Posterior vena cava (tissue), 2 donors: ENCODE measurements at regions of chr9 and their contacts with region 1.

Region 1: GRCh38 chr9:88635151-88635550 is 100.2 kb downstream of the NXNL2 start:
- DNase-seq: no peak

Region 2: DNA sequence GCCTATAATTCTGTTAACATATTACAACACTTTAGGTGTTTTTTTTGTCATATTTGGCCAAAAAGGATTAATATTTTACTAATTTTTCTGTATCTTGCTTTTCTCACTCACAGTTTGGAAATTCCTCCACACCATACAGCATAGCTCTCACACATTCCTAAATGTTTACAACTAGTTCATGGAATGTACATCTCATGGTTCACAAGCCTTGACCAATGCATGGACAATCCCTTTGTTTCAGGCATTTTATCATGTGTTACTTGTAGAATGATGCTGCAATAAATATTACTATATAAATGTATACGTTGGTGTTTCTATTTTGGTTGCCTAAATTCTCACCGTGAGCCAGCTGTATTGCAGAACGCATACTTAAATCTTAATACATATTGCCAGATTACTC is 416.4 kb before region 1 on chr9:
- intact Hi-C with region 1: no loop called
- DNase-seq: no peak

Region 3: DNA sequence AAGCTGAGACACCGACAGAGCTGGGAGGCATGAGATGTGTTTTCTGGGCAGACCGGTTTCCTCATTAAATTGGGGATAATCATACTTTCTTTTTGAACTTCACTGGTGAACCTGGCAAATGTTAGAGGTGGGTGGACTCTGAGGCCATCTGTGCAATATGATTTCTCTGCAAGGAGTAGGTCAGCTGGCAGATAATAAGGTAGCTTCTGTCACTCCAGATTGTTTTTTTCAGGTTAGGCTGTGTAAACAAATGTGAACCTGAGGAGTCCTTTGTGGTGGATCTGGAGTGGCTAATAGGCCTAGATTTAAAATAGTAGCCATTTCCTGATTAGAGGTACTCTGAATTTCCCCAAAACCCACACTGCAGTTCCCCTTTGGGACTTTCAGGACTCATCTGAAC is 280.8 kb after region 1 on chr9:
- intact Hi-C with region 1: loop called in 1 of 2 experiments (anchors 5 kb)
- DNase-seq: no peak